ENCODE measurements at regions of chr21 and their contacts with region 1.

Region 1: DNA sequence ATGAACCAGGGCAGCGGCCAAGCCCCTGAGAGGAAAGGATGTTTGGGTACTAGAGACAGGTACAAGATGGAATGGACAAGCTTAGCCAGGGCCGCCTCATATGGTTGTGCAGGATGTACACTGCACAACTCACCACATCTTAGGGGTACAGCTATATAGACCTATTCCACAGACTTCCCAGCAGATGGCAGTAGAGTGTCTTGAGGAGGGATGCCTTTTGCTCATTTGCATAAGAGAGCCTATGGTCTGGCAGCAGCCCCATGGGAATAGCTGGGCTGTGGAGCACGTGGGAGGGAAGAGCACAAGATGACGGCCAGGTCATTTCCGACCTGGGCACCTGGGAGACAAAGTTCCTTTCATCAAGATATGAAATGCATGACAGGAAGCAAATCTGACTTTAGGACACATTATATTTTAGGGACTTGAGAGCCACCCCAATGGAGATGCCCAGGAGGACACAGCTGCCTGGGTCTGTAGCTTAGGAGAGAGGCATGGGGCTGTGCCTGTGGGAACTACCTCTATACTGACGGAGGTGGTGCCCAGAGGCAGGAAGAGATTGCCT is 215.5 kb downstream of the KCNJ6 start:
- DNase-seq: peak in 5 of 6 donors; percentile 37 to 74 (median 68)
- ATAC-seq: peak; percentile 91 to 98 (median 96)
- H3K4me3 ChIP-seq: no peak overlapping the region
- H3K27ac ChIP-seq: no peak overlapping the region
- H3K4me1 ChIP-seq: no peaks in the 10 kb centered on the region
- H3K27me3 ChIP-seq: peaks cover 0 to 4% (median 0%) of the 10 kb centered on the region in 4 donors
- CTCF ChIP-seq: peak; percentile 35 to 54 (median 42)

Region 2: GRCh38 chr21:37593015-37593414 is 107.7 kb before region 1 on chr21:
- intact Hi-C with region 1: no loop called
- DNase-seq: no peak
- ATAC-seq: no peak
- H3K4me3 ChIP-seq: no peak overlapping the region
- H3K27ac ChIP-seq: no peak overlapping the region
- H3K4me1 ChIP-seq: no peaks in the 10 kb centered on the region
- H3K27me3 ChIP-seq: no peaks in the 10 kb centered on the region
- CTCF ChIP-seq: no peak

Region 3: GRCh38 chr21:38126669-38127303 is 426.1 kb after region 1 on chr21:
- intact Hi-C with region 1: loop called in 2 of 3 experiments (anchors 10 kb)
- DNase-seq: peak; percentile 30 to 76 (median 62)
- ATAC-seq: peak; percentile 68 to 91 (median 88)
- H3K4me3 ChIP-seq: no peak overlapping the region
- H3K27ac ChIP-seq: no peak overlapping the region
- H3K4me1 ChIP-seq: no peaks in the 10 kb centered on the region
- H3K27me3 ChIP-seq: peaks cover 0 to 13% (median 1%) of the 10 kb centered on the region in 4 donors
- CTCF ChIP-seq: peak; percentile 29 to 71 (median 59)

Measured in pancreas (tissue), 10 donors.